ENCODE measurements at regions of chr13 and their contacts with region 1.

Region 1: DNA sequence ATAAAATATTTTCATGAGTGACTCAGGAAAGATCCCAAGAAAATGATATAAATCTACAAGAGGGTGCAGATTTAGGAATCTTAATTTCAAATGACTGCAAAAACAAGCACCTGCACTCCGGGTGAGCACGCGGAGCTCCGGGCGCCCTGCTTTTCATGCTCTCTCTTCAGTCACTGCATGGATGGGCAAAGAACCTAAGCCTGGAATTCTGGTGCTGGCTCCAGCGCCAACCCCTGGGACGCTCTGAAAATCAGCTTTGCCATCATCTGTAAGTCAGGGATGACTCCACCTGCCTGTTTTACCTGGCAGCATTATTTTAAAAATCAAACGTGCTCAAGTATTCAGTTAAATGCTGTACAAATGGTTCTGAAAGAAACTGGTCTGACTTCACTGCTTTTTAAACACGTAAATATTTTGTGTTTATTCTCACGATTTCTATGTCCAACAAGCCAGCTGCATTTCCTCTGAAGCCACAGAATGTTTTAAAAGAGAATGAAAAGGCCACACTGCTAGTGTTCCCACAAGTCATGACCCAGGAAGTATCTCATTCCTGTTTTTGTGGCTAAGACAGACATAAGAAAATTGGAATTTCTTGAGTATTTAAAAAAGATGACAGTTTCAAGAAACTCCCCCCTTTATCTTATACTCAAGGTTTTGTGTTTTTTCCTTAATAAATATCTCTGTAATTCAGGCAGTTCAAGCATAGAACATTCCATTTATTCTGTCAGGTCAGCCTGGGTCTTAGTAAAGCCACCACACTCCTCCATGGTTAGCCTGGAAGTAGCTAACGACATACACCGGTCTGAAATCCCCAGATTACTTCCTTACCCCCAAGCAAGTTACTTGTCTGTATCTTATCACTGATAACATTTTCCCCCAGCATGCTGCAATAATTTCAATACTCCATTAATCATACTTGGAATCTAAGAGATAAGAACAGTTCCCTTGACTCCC is 81.1 kb downstream of the COL4A1 start:
- DNase-seq: no peak
- ATAC-seq: no peak

Region 2: DNA sequence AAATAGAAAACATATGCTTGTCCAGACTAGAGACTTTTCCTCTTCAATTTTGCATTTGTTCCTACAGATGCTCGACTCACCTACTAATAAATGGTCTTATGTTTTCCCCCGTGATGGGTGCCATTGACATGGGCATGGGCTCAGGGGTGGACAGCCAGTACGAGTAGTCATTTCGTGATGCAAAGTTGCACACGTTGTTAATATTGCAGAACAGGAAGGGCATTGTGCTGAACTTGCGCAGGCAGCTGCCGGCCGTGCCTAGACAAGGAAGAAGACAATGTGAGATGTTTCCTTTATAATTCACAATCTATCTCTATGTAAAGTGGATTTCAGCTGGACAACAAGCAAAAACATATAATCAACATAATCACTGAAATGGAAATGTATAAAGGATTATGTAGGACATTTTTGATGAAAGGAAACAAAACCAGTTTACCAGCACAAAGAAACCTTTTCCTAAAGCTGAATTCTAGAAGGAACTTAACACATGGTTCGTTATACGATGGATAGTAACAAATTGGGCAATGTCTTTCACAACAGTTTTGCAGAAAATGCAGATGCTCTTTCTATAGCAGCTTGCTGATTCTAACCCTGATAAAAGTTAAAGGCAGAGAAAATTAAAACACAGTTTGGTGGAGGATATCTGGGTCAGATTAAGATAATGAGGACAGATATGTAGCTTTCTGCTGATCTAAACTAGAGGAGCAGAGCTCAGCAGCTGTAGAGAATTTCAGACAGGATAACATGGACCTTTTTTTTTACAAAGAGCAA is 64.6 kb before region 1 on chr13:
- intact Hi-C with region 1: no loop called
- DNase-seq: no peak
- ATAC-seq: peak in 1 of 2 donors; percentile 64

Region 3: GRCh38 chr13:110433014-110433413 is 207.1 kb after region 1 on chr13:
- intact Hi-C with region 1: loop called in 1 of 2 experiments (anchors 10 kb)
- DNase-seq: peak; percentile 81
- ATAC-seq: peak; percentile 81